Calu3 (cell line): ENCODE measurements at regions of chr12 and their contacts with region 1.

Region 1: GRCh38 chr12:57229634-57230380 is at the start of gene SHMT2:
- DNase-seq: peak; percentile 97
- H3K4me3 Mint-ChIP-seq: peak within 1 kb of the TSS; percentile 98
- H3K27ac Mint-ChIP-seq: peak within 1 kb of the TSS; percentile 99
- H3K4me1 Mint-ChIP-seq: peaks cover 39% of the 10 kb centered on the region
- H3K27me3 Mint-ChIP-seq: peaks cover 34% of the 10 kb centered on the region
- CTCF ChIP-seq: no peak
- total RNA-seq, gene SHMT2: 203 and 243 TPM in 2 replicates

Region 2: GRCh38 chr12:57175428-57176138 is 54.2 kb before region 1 on chr12:
- CTCF ChIA-PET with region 1: no interaction called
- intact Hi-C with region 1: no loop called
- DNase-seq: peak; percentile 88
- H3K4me3 Mint-ChIP-seq: no peak overlapping the region
- H3K27ac Mint-ChIP-seq: no peak overlapping the region
- H3K4me1 Mint-ChIP-seq: no peaks in the 10 kb centered on the region
- H3K27me3 Mint-ChIP-seq: peaks cover 13% of the 10 kb centered on the region
- CTCF ChIP-seq: peak; percentile 64

Region 3: DNA sequence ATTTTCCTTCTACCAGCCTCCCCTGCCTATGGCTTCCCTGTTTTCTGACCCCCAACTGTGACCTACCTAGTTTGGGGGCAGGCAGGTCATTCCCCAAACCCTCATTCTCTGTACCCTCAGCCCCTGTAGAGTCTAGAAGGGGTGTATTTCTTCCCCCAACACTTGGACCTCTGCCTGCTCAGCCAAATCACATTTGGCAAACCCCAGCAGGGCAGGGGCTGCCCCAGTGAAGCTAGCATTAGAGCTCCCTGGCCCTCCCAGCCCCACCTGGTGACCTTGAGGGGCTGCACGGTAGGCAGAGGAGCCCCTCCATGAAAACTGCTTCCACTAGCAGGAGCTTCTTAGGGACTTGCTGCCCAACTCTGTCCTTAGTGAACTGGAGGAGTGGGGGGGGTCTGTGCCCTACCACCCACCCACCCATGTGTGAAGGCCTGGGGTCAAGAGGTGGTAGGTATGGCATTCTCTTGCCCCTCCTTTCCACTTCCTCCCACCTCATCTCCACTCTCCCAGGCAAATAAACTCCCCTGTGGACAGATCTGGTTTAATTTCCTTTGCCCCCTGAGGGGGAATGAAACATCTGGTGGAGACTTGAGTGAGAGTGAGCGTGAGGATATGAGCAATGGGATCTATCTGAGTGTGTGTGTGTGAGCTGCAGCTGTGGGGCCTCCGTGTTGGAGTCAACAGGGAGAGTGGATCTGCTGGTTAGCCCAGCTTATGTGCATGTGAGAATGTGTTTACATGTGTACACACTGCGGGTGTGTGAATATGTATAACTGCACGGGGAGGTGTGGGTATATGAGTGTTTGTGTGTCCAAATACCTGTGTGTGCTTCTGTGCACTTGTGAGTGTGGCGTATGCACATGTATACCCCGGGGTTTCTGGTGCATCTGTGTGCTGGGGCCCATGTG is 11.5 kb before region 1 on chr12:
- CTCF ChIA-PET with region 1: interaction called, 26 read pairs
- intact Hi-C with region 1: no loop called
- DNase-seq: no peak
- H3K4me3 Mint-ChIP-seq: peak overlapping the region; percentile 71
- H3K27ac Mint-ChIP-seq: peak overlapping the region; percentile 15
- H3K4me1 Mint-ChIP-seq: peaks cover 62% of the 10 kb centered on the region
- H3K27me3 Mint-ChIP-seq: peaks cover 90% of the 10 kb centered on the region
- CTCF ChIP-seq: no peak

Region 4: GRCh38 chr12:57803319-57803893 is 573.6 kb after region 1 on chr12:
- CTCF ChIA-PET with region 1: no interaction called
- intact Hi-C with region 1: no loop called
- DNase-seq: peak; percentile 60
- H3K4me3 Mint-ChIP-seq: no peak overlapping the region
- H3K27ac Mint-ChIP-seq: no peak overlapping the region
- H3K4me1 Mint-ChIP-seq: no peaks in the 10 kb centered on the region
- H3K27me3 Mint-ChIP-seq: no peaks in the 10 kb centered on the region
- CTCF ChIP-seq: peak; percentile 84